IMR-90 (cell line): ENCODE measurements at regions of chr4 and their contacts with region 1.

Region 1: GRCh38 chr4:122489061-122489460 is 32.5 kb upstream of the IL2 start:
- DNase-seq: no peak
- ATAC-seq: no peak
- H3K4me3 ChIP-seq: no peak overlapping the region
- H3K27ac ChIP-seq: no peak overlapping the region
- H3K4me1 ChIP-seq: no peaks in the 10 kb centered on the region
- H3K27me3 ChIP-seq: no peaks in the 10 kb centered on the region; the same call in 1 of the 2 replicates
- CTCF ChIP-seq: no peak
- POLR2A ChIP-seq: no peak
- RAD21 ChIP-seq: no peak

Region 2: DNA sequence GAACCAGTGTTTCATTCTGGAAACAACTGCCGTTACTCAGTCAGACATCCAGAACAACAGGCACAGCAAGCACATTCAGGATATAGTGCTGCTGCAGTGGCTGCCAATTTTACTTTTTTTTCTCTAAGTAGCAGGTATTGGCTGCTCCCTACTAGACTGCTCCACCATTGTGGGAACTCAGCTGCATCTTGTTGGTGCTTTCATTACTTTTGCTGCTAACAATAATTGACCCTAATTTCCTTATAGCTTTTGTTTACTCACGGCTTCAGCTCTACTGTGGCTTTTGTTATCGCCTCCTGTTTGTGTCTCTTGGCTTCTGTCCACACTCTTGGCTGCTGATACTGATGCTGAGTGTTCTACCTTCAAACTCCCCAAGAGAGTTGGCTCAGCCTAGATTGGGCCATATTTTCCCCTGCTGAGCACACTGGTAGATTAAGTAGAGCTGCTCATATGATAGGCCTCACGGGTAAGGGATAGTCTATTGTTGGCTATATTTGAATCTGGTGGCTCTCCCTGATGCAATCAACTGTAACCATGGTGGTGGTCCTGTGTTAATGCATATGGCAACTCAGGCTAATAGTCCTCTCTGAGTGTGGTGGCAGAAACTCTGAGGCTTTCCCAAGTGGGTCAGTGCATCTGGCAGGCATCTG is 11.9 kb after region 1 on chr4:
- CTCF ChIA-PET with region 1: no interaction called
- POLR2A ChIA-PET with region 1: no interaction called
- dilution Hi-C with region 1: no loop called
- in situ Hi-C with region 1: no loop called
- intact Hi-C with region 1: no loop called
- DNase-seq: no peak
- ATAC-seq: no peak
- H3K4me3 ChIP-seq: no peak overlapping the region
- H3K27ac ChIP-seq: no peak overlapping the region
- H3K4me1 ChIP-seq: no peaks in the 10 kb centered on the region
- H3K27me3 ChIP-seq: no peaks in the 10 kb centered on the region; the same call in 1 of the 2 replicates
- CTCF ChIP-seq: no peak
- POLR2A ChIP-seq: no peak
- RAD21 ChIP-seq: no peak

Region 3: GRCh38 chr4:122552898-122553297 is 63.8 kb after region 1 on chr4:
- CTCF ChIA-PET with region 1: no interaction called
- POLR2A ChIA-PET with region 1: no interaction called
- dilution Hi-C with region 1: no loop called
- in situ Hi-C with region 1: no loop called
- intact Hi-C with region 1: loop called (anchors 5 kb)
- DNase-seq: no peak
- ATAC-seq: no peak
- H3K4me3 ChIP-seq: no peak overlapping the region
- H3K27ac ChIP-seq: no peak overlapping the region
- H3K4me1 ChIP-seq: no peaks in the 10 kb centered on the region
- H3K27me3 ChIP-seq: 0 out of 2 replicates have a peak, but pooled peaks cover 2% of the 10 kb centered on the region
- CTCF ChIP-seq: no peak
- POLR2A ChIP-seq: no peak
- RAD21 ChIP-seq: no peak